Activated T-helper 2 cell treated with anti-CD3 and anti-CD28 coated beads, Interferon-gamma antibody, Interleukin-2, Interleukin-4, amounts not matched to agents 10 μg/mL and 5 μg/mL and 100 μg/mL, durations not matched to agents 14 hours and 24 hours and 36 hours (primary cell): ENCODE measurements at regions of chr19 and their contacts with region 1.

Region 1: DNA sequence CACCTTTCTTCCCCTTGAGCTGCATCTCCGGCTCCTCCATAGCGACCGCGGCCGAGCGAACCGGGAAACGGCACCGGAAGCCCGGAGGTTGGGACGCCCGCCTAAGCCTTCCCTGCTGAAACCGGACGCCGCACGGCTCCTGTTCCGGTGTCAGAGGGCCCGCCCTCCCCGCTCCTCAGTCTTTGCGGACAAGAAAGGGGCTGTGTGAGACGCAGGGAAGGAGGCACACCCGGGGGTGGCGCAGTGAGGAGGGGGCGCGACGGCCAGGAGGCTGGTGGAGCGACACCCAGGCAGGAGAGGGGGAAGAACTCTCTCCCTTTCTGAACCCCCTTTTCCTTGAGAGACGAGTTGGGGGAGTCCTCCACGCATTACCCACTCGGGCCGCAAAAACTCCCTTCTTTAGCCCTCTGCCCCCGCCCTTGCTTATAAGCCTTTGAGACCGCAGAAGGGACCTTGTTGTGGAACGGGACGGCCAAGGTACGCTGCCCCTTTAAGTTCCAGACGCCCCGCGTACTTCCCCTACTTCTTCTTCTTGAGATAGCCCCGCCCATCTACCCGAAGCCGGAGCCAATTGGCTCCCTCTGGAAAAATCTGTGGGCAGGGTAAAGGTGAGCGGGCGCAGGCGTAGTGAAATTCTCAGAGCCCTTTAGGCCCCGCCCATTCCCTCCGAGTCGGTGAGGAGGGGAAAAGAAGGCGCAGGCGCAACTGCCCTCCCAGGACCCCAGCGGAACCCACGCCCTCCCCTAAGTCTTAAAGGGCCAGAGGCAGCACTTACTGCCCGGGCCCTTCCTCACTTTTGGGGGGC is at the starts of genes BORCS8 and RFXANK:
- DNase-seq: peak; percentile 99
- H3K4me3 Mint-ChIP-seq: peak within 1 kb of the TSS; percentile 94
- H3K27ac Mint-ChIP-seq: peak within 1 kb of the TSS; percentile 99
- H3K4me1 Mint-ChIP-seq: peaks cover 18% of the 10 kb centered on the region
- H3K27me3 Mint-ChIP-seq: no peaks in the 10 kb centered on the region
- total RNA-seq, gene BORCS8: 28.8 and 33.2 TPM in 2 replicates
- total RNA-seq, gene RFXANK: 105 and 112 TPM in 2 replicates

Region 2: GRCh38 chr19:18919086-18919899 is 273.0 kb before region 1 on chr19 and contains the starts of genes COPE and DDX49:
- intact Hi-C with region 1: loop called (anchors 5 kb)
- DNase-seq: peak; percentile 98
- H3K4me3 Mint-ChIP-seq: peak within 1 kb of the TSS; percentile 96
- H3K27ac Mint-ChIP-seq: peak within 1 kb of the TSS; percentile 94
- H3K4me1 Mint-ChIP-seq: peaks cover 19% of the 10 kb centered on the region
- H3K27me3 Mint-ChIP-seq: no peaks in the 10 kb centered on the region
- total RNA-seq, gene COPE: 231 and 240 TPM in 2 replicates
- total RNA-seq, gene DDX49: 75.2 and 77.5 TPM in 2 replicates

Region 3: GRCh38 chr19:19033426-19034203 is 158.7 kb before region 1 on chr19 and contains the starts of genes ARMC6 and SUGP2:
- intact Hi-C with region 1: loop called (anchors 5 kb)
- DNase-seq: peak; percentile 89
- H3K4me3 Mint-ChIP-seq: peak within 1 kb of the TSS; percentile 90
- H3K27ac Mint-ChIP-seq: peak within 1 kb of the TSS; percentile 92
- H3K4me1 Mint-ChIP-seq: peaks cover 26% of the 10 kb centered on the region
- H3K27me3 Mint-ChIP-seq: no peaks in the 10 kb centered on the region
- total RNA-seq, gene ARMC6: 44.9 and 53.9 TPM in 2 replicates
- total RNA-seq, gene SUGP2: 129 and 140 TPM in 2 replicates

Region 4: GRCh38 chr19:19170053-19170872 is 22.0 kb before region 1 on chr19 and contains the start of gene MEF2B:
- intact Hi-C with region 1: loop called (anchors 1 kb)
- DNase-seq: peak; percentile 78
- H3K4me3 Mint-ChIP-seq: no peak within 1 kb of the TSS
- H3K27ac Mint-ChIP-seq: no peak within 1 kb of the TSS
- H3K4me1 Mint-ChIP-seq: peaks cover 8% of the 10 kb centered on the region
- H3K27me3 Mint-ChIP-seq: no peaks in the 10 kb centered on the region
- total RNA-seq, gene MEF2B: 2.7 and 3.0 TPM in 2 replicates

Region 5: GRCh38 chr19:19203012-19203856 is 11.0 kb after region 1 on chr19 and contains the start of gene NR2C2AP:
- intact Hi-C with region 1: loop called (anchors 1 kb)
- DNase-seq: peak; percentile 90
- H3K4me3 Mint-ChIP-seq: peak within 1 kb of the TSS; percentile 92
- H3K27ac Mint-ChIP-seq: peak within 1 kb of the TSS; percentile 85
- H3K4me1 Mint-ChIP-seq: peaks cover 28% of the 10 kb centered on the region
- H3K27me3 Mint-ChIP-seq: no peaks in the 10 kb centered on the region
- total RNA-seq, gene NR2C2AP: 32.5 and 37.0 TPM in 2 replicates

Region 6: DNA sequence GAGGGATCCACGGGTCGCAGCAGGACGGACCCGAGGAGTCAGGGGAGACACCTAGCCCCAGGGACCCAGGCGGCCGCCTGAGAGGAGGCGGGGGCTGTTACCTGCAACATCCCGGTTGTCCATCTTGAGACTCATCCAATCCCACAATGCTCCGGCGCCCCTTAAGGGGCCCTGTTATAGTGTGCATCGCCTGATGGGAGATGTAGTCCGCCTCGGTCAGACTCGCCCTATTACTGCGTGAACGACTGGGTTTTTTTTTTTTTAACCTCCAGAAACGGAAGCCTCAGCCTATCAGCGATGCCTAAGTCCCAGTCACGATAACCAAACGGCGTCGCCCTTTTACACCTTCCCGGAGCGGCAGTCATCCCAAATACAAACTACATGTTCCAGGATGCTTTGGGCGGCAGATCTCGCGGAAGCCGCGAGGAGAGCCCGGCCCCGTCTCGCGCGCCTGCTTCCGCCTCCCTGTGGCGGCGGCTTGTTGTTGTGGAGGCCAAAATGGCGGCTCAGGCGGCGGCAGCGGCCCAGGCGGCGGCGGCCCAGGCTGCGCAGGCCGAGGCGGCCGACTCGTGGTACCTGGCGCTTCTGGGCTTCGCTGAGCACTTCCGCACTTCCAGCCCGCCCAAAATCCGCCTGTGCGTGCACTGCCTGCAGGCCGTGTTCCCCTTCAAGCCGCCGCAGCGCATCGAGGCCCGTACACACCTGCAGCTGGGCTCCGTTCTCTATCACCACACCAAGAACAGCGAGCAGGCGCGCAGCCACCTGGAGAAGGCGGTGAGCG is 128.3 kb after region 1 on chr19 and contains the starts of genes MAU2 and SUGP1:
- intact Hi-C with region 1: loop called (anchors 1 kb)
- DNase-seq: peak; percentile 91
- H3K4me3 Mint-ChIP-seq: peak within 1 kb of the TSS; percentile 95
- H3K27ac Mint-ChIP-seq: peak within 1 kb of the TSS; percentile 100
- H3K4me1 Mint-ChIP-seq: peaks cover 29% of the 10 kb centered on the region
- H3K27me3 Mint-ChIP-seq: no peaks in the 10 kb centered on the region
- total RNA-seq, gene MAU2: 55.3 and 60.3 TPM in 2 replicates
- total RNA-seq, gene SUGP1: 67.6 and 73.4 TPM in 2 replicates

Region 7: GRCh38 chr19:19937403-19937802 is 745.1 kb after region 1 on chr19:
- intact Hi-C with region 1: no loop called
- DNase-seq: no peak
- H3K4me3 Mint-ChIP-seq: no peak overlapping the region
- H3K27ac Mint-ChIP-seq: no peak overlapping the region
- H3K4me1 Mint-ChIP-seq: no peaks in the 10 kb centered on the region
- H3K27me3 Mint-ChIP-seq: no peaks in the 10 kb centered on the region